CD14-positive monocyte (primary cell): ENCODE measurements at regions of chr17 and their contacts with region 1.

Region 1: DNA sequence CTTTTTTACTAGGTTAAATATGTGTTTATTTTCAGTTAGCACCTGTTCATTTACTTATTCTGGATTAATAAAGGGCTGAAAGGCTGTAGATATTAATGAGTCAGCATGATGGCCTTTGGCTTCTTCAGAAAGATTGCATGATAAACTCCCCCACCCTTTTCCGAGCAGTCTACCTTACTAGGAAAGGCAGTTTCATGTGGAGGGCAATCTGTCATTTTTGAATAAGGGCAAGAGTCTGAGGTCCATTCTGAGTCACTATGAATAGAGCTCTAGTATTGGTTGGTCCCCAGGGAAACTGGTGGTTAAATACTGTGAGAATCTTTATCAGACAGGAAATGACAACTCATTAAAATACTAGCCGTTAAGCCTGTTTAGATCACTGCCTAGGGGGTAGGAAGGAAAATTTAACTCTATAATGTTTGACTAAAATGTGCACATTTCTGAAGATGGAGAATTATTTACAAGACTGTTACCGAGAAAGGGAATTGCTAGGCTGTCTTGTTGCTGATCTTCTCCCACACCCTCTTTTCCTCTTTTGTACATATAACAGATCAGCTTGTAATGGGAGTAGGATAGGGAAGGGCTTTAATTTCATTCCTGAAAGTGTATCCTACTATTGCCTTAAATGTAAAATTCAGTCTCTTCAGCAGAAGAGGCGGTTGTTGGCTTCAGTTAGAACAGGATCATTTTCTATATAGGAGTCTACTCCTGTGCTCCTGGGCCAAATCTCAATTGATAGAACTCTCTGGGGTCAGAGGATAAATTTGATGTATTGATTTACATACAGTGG is 63.3 kb downstream of the TUBD1 start:
- DNase-seq: peak; percentile 86 to 97 (median 93)
- H3K4me3 ChIP-seq: peak overlapping the region in 2 of 3 experiments; percentile 31 to 61
- H3K4me3 Mint-ChIP-seq: peak overlapping the region; percentile 61 to 78
- H3K27ac ChIP-seq: peak overlapping the region in 1 of 2 donors; percentile 86
- H3K27ac Mint-ChIP-seq: peak overlapping the region; percentile 86 to 95 (median 91)
- H3K4me1 ChIP-seq: peaks cover 22 to 38% of the 10 kb centered on the region in 2 donors
- H3K4me1 Mint-ChIP-seq: peaks cover 50% of the 10 kb centered on the region
- H3K27me3 ChIP-seq: no peaks in the 10 kb centered on the region
- H3K27me3 Mint-ChIP-seq: peaks cover 0 to 3% (median 0%) of the 10 kb centered on the region in 3 donors
- CTCF ChIP-seq: no peak

Region 2: DNA sequence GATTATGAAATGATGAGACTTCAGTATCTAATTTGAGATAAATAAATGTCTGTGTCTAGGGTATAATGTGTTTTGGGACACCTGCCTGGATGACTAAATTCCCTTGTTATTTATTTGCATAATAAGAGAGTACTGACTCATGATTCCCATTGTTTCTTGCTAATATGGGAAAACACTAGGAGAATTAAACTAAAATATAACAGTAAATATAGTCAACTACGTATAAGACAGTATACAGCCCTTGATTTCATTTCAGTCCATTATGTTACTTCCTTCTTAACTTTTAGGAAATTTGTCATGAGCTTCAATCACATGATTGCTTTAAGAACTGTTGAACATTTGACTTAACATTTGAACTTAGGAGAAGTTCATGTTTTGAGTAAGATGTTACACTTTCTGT is 59.5 kb before region 1 on chr17:
- intact Hi-C with region 1: loop called in 1 of 2 experiments (anchors 10 kb)
- DNase-seq: peak; percentile 44 to 82 (median 79)
- H3K4me3 ChIP-seq: peak overlapping the region in 2 of 3 experiments; percentile 9 to 45
- H3K4me3 Mint-ChIP-seq: peak overlapping the region in 1 of 2 donors; percentile 46
- H3K27ac ChIP-seq: peak overlapping the region in 1 of 2 donors; percentile 86
- H3K27ac Mint-ChIP-seq: peak overlapping the region; percentile 83 to 96 (median 91)
- H3K4me1 ChIP-seq: peaks cover 24 to 31% of the 10 kb centered on the region in 2 donors
- H3K4me1 Mint-ChIP-seq: peaks cover 22% of the 10 kb centered on the region
- H3K27me3 ChIP-seq: no peaks in the 10 kb centered on the region
- H3K27me3 Mint-ChIP-seq: peaks cover 0 to 4% (median 0%) of the 10 kb centered on the region in 3 donors
- CTCF ChIP-seq: no peak

Region 3: DNA sequence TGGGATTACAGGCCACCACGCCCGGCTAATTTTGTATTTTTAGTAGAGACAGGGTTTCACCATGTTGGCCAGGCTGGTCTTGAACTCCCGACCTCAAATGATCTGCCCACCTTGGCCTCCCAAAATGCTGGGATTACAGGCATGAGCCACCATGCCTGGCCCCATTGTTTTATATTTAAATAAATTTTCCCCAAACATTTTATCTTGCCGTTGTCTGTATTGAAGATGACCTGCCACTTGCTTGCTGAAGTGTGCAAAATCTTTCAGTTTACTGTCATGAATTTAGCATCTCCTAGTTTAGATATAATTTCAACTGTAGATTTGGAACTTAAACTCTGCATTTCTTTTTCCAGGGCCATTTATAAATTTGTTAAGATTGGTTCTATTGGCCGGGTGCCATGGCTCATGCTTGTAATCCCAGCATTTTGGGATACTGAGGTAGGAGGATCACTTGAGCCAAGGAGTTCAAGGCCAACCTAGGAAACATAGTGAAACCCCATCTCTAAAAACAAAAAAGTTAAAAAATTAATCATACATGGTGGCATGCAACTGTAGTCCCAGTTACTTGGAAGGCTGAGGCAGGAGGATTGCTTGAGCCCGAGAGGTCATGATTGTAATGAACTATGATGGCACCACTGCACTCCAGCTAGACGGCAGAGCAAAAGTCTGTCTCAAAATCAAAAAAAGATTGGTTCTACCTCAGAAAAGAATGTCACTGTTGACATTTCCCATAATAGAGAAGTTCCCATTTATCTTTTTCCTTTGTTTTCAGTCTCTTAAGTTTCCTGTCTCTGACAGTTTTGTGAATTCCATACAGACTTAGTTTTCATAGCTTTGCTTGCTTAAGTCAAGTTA is 37.6 kb before region 1 on chr17:
- intact Hi-C with region 1: loop called in 1 of 2 experiments (anchors 5 kb)
- DNase-seq: no peak
- H3K4me3 ChIP-seq: peak overlapping the region in 1 of 3 experiments; percentile 11
- H3K4me3 Mint-ChIP-seq: no peak overlapping the region
- H3K27ac ChIP-seq: peak overlapping the region; percentile 94 to 95
- H3K27ac Mint-ChIP-seq: peak overlapping the region; percentile 91 to 99 (median 98)
- H3K4me1 ChIP-seq: peaks cover 54 to 94% of the 10 kb centered on the region in 2 donors
- H3K4me1 Mint-ChIP-seq: peaks cover 56% of the 10 kb centered on the region
- H3K27me3 ChIP-seq: no peaks in the 10 kb centered on the region
- H3K27me3 Mint-ChIP-seq: peaks cover 0 to 5% (median 0%) of the 10 kb centered on the region in 3 donors
- CTCF ChIP-seq: no peak

Region 4: GRCh38 chr17:59807892-59808509 is 21.4 kb before region 1 on chr17:
- intact Hi-C with region 1: no loop called
- DNase-seq: no peak
- H3K4me3 ChIP-seq: no peak overlapping the region
- H3K4me3 Mint-ChIP-seq: no peak overlapping the region
- H3K27ac ChIP-seq: peak overlapping the region in 1 of 2 donors; percentile 29
- H3K27ac Mint-ChIP-seq: peak overlapping the region in 5 of 7 donors; percentile 17 to 70 (median 42)
- H3K4me1 ChIP-seq: peaks cover 30 to 71% of the 10 kb centered on the region in 2 donors
- H3K4me1 Mint-ChIP-seq: peaks cover 38% of the 10 kb centered on the region
- H3K27me3 ChIP-seq: no peaks in the 10 kb centered on the region
- H3K27me3 Mint-ChIP-seq: peaks cover 0 to 2% (median 0%) of the 10 kb centered on the region in 3 donors
- CTCF ChIP-seq: no peak

Region 5: DNA sequence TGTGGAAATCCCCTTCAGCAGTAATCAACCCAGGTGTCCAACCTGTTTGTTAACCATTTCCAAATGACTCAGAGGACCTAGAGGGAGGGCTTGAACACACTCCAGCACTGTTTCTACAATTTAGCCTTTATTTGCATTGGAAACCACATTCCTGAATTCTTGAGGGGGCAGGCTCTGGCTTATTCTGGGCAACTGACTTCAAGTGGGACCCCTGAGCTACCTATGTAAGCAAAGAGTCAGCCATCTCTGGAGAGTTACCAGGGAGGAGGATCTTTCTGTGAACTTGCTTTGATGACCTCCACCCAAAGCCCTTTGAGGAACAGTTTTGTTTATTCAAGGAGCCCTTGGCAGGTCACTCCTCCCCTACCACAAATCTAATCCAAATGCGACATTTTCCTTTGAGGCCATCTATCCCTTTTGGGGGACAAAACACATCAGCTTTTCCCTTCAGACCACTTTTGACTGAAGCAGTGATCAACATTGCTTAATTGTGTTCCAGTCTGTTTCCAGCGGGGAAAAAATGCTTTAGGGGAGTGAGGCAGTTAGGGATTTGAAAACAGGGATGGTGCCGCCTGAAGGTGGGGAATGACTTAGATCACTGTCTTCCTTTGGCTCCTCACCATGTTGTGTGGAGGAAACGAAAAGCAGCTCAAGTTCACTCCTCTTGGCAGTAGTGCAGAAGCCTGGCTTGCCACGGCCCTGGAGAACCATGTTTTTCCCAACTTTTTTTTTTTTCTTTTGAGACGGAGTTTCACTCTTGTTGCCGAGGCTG is 17.2 kb after region 1 on chr17:
- intact Hi-C with region 1: no loop called
- DNase-seq: peak in 2 of 3 donors; percentile 63 to 73
- H3K4me3 ChIP-seq: peak overlapping the region in 1 of 3 experiments; percentile 64
- H3K4me3 Mint-ChIP-seq: no peak overlapping the region
- H3K27ac ChIP-seq: peak overlapping the region; percentile 91 to 95
- H3K27ac Mint-ChIP-seq: peak overlapping the region; percentile 85 to 100 (median 94)
- H3K4me1 ChIP-seq: peaks cover 81 to 99% of the 10 kb centered on the region in 2 donors
- H3K4me1 Mint-ChIP-seq: peaks cover 89% of the 10 kb centered on the region
- H3K27me3 ChIP-seq: no peaks in the 10 kb centered on the region
- H3K27me3 Mint-ChIP-seq: peaks cover 0 to 2% (median 0%) of the 10 kb centered on the region in 3 donors
- CTCF ChIP-seq: no peak